ENCODE measurements at regions of chr10 and their contacts with region 1.

Region 1: DNA sequence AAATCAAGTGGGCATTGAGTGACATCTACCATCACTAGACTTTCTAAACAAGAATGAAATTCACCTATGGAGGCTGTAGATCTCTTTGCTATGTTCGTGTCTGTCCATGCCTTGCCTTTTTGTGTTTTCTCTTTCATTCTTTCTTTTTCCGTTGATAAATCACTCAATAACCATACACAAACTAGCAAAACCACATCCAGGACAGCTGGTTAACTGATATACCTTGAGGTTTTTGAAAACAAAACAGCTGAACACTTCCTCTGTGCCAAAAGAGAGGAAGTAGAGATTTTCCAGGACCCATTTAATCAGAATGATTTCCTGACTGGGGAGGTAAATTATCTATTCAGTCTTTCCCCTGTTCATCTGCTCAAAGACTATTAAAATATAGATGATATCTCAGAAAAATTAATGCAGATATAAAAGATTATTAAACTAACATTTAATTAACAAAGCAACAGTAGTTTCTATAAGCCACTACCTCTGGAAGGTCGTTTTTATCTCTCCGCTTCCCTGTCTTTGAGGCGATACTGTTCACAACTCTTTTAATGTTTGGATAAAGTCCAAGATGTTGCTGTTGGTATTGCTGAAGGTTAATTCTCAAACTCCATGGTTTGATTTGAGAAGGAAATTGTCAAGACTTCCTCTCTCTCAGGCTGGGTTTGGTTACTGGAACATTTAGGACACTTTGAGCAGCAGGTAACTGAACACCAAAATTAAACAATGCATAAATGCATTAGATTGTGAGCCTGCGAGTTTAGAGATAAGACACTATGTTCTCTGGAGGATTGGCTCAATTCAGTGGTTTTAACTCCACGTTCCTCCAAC is 24.4 kb upstream of the C10orf67 start:
- DNase-seq: peak; percentile 42
- H3K4me3 Mint-ChIP-seq: peak overlapping the region; percentile 63
- H3K27ac Mint-ChIP-seq: peak overlapping the region; percentile 79
- H3K4me1 Mint-ChIP-seq: peaks cover 64% of the 10 kb centered on the region
- H3K27me3 Mint-ChIP-seq: peaks cover 2% of the 10 kb centered on the region

Region 2: GRCh38 chr10:21525367-21526183 is 1843.5 kb before region 1 on chr10 and contains the start of gene SKIDA1:
- intact Hi-C with region 1: loop called (anchors 10 kb)
- DNase-seq: peak; percentile 51
- H3K4me3 Mint-ChIP-seq: peak within 1 kb of the TSS; percentile 85
- H3K27ac Mint-ChIP-seq: peak within 1 kb of the TSS; percentile 94
- H3K4me1 Mint-ChIP-seq: peaks cover 39% of the 10 kb centered on the region
- H3K27me3 Mint-ChIP-seq: peaks cover 44% of the 10 kb centered on the region
- total RNA-seq, gene SKIDA1: 0.05 and 0.15 TPM in 2 replicates

Region 3: DNA sequence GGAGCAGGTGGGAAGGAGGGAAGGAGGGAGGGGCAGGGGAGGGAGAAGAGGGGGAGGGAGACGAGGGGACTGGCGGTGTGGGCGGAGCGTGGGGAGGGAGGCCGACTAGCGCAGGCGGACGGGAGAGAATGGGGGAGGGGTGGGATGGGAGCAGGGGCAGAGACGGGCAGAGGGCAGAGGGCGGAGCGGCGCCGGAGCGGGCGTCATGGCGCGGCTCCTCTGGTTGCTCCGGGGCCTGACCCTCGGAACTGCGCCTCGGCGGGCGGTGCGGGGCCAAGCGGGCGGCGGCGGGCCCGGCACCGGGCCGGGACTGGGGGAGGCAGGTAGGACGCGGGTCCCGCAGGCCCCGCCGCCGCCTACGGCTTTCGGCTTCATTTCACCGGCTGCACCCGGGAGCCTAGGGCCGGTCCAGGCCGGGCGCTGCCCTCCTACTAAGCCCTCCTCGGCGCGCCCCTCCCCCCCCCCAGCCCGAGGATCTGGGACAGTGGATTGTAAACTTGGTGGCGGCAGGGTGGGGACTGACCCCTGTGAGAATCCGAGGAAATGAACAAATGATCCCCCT is 273.5 kb before region 1 on chr10 and contains the start of gene MSRB2:
- intact Hi-C with region 1: loop called (anchors 1 kb)
- DNase-seq: peak; percentile 64
- H3K4me3 Mint-ChIP-seq: peak within 1 kb of the TSS; percentile 92
- H3K27ac Mint-ChIP-seq: peak within 1 kb of the TSS; percentile 91
- H3K4me1 Mint-ChIP-seq: peaks cover 36% of the 10 kb centered on the region
- H3K27me3 Mint-ChIP-seq: peaks cover 6% of the 10 kb centered on the region
- total RNA-seq, gene MSRB2: 3.0 and 4.0 TPM in 2 replicates

Region 4: GRCh38 chr10:23314835-23315239 is 54.2 kb before region 1 on chr10:
- intact Hi-C with region 1: no loop called
- DNase-seq: peak; percentile 29
- H3K4me3 Mint-ChIP-seq: no peak overlapping the region
- H3K27ac Mint-ChIP-seq: no peak overlapping the region
- H3K4me1 Mint-ChIP-seq: peaks cover 5% of the 10 kb centered on the region
- H3K27me3 Mint-ChIP-seq: no peaks in the 10 kb centered on the region

Region 5: DNA sequence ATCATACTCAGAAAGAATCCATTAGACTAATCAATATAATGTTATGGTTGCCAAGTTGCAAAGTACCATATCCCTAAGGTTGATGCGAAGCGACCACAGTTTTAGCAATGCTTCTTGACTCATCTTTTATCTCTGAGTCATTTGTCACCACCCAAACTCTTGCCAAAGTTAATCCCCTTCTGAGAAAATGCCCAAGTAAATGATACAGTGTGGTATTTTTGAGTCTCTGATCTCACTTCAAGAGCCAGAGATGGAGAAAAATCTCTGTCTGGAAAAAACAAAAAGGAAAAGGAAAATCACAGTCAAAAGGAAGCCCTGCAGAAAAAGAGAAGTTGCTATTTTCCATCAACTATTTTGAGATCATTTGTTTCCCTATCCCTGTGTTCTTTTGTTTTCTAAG is 43.2 kb after region 1 on chr10:
- intact Hi-C with region 1: loop called (anchors 1 kb)
- DNase-seq: no peak
- H3K4me3 Mint-ChIP-seq: no peak overlapping the region
- H3K27ac Mint-ChIP-seq: peak overlapping the region; percentile 80
- H3K4me1 Mint-ChIP-seq: peaks cover 22% of the 10 kb centered on the region
- H3K27me3 Mint-ChIP-seq: no peaks in the 10 kb centered on the region

Measured in activated T-helper 1 cell treated with anti-CD3 and anti-CD28 coated beads, Interleukin-12 subunit alpha, Interleukin-12 subunit beta, Interleukin-2, Interleukin-4 antibody, amounts not matched to agents 30 ng/mL and 10 ng/mL and 1 ng/mL, durations not matched to agents 14 hours and 24 hours and 36 hours (primary cell).